ENCODE measurements at regions of chr9 and their contacts with region 1.

Region 1: GRCh38 chr9:125308683-125309082 is 47.1 kb downstream of the GAPVD1 start:
- DNase-seq: no peak
- ATAC-seq: no peak
- H3K4me3 ChIP-seq: no peak overlapping the region
- H3K27ac ChIP-seq: no peak overlapping the region
- H3K4me1 ChIP-seq: no peaks in the 10 kb centered on the region
- H3K27me3 ChIP-seq: no peaks in the 10 kb centered on the region
- CTCF ChIP-seq: no peak

Region 2: GRCh38 chr9:125233678-125234077 is 75.0 kb before region 1 on chr9:
- CTCF ChIA-PET with region 1: no interaction called
- POLR2A ChIA-PET with region 1: interaction called, 14 read pairs
- in situ Hi-C with region 1: no loop called
- intact Hi-C with region 1: no loop called
- DNase-seq: peak; percentile 79
- ATAC-seq: peak; percentile 82
- H3K4me3 ChIP-seq: no peak overlapping the region
- H3K27ac ChIP-seq: 0 out of 2 replicates have a peak overlapping the region, but pooled peaks have one; percentile 15
- H3K4me1 ChIP-seq: peaks cover 29% of the 10 kb centered on the region
- H3K27me3 ChIP-seq: no peaks in the 10 kb centered on the region
- CTCF ChIP-seq: no peak

Region 3: DNA sequence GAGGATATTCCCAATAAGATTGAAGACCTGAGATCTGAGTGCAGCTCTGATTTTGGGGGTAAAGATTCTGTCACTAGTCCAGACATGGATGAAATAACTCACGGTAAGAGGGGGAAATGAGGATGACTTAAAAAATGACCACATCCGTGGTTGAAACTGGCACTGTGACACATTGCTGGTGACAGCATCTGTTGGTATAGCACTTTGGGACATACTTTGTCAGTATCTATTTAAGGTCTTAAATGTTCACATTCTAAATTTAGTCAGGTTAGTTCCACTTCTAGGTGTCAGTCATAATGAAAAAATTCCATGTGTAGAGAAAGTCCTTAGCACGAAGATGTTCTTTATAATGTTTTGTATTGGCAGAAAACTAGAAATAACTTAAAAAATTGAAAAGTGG is 23.8 kb after region 1 on chr9:
- CTCF ChIA-PET with region 1: interaction called, 10 read pairs
- POLR2A ChIA-PET with region 1: interaction called, 3 read pairs
- in situ Hi-C with region 1: no loop called
- intact Hi-C with region 1: no loop called
- DNase-seq: no peak
- ATAC-seq: no peak
- H3K4me3 ChIP-seq: no peak overlapping the region
- H3K27ac ChIP-seq: no peak overlapping the region
- H3K4me1 ChIP-seq: no peaks in the 10 kb centered on the region
- H3K27me3 ChIP-seq: no peaks in the 10 kb centered on the region
- CTCF ChIP-seq: no peak